ENCODE measurements at regions of chr7 and their contacts with region 1.

Region 1: GRCh38 chr7:116200963-116201362 is 9.4 kb upstream of the TES start:
- DNase-seq: peak; percentile 41
- H3K4me3 ChIP-seq: no peak overlapping the region
- H3K27ac ChIP-seq: no peak overlapping the region
- H3K4me1 ChIP-seq: no peaks in the 10 kb centered on the region
- H3K27me3 ChIP-seq: no peaks in the 10 kb centered on the region
- CTCF ChIP-seq: no peak
- POLR2A ChIP-seq: no peak

Region 2: DNA sequence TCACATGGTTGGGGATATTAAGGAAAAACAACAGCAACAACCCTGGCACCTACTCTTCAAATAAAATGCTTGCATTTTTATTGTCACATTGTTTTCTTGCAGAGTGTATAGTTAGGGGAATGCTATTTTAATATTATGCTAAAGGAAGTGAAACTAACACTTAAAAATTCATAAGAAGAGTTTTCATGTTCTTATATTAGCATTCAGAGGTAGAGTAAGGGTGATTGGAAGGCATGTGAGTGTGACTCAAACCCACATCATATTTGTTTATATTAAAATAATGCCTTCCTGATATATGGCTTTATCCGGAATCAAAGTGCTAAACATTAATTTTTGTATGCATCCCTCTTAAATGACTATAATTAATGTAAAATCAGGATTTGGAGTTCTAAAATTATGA is 50.4 kb before region 1 on chr7:
- CTCF ChIA-PET with region 1: no interaction called
- POLR2A ChIA-PET with region 1: no interaction called
- dilution Hi-C with region 1: no loop called
- intact Hi-C with region 1: no loop called
- DNase-seq: peak; percentile 62
- H3K4me3 ChIP-seq: no peak overlapping the region
- H3K27ac ChIP-seq: peak overlapping the region; percentile 20
- H3K4me1 ChIP-seq: peaks cover 11% of the 10 kb centered on the region
- H3K27me3 ChIP-seq: no peaks in the 10 kb centered on the region
- CTCF ChIP-seq: no peak
- POLR2A ChIP-seq: no peak

Region 3: GRCh38 chr7:116211006-116211912 is 10.3 kb after region 1 on chr7:
- CTCF ChIA-PET with region 1: interaction called, 6 read pairs
- POLR2A ChIA-PET with region 1: interaction called, 4 read pairs
- dilution Hi-C with region 1: no loop called
- intact Hi-C with region 1: loop called (anchors 1 kb)
- DNase-seq: peak; percentile 86
- H3K4me3 ChIP-seq: peak overlapping the region; percentile 79 to 89 (median 84)
- H3K27ac ChIP-seq: peak overlapping the region; percentile 89
- H3K4me1 ChIP-seq: peaks cover 39% of the 10 kb centered on the region
- H3K27me3 ChIP-seq: no peaks in the 10 kb centered on the region
- CTCF ChIP-seq: no peak
- POLR2A ChIP-seq: peak; percentile 52

Measured in endothelial cell of umbilical vein (primary cell).